Ascending aorta (tissue), 2 donors: ENCODE measurements at regions of chr15 and their contacts with region 1.

Region 1: DNA sequence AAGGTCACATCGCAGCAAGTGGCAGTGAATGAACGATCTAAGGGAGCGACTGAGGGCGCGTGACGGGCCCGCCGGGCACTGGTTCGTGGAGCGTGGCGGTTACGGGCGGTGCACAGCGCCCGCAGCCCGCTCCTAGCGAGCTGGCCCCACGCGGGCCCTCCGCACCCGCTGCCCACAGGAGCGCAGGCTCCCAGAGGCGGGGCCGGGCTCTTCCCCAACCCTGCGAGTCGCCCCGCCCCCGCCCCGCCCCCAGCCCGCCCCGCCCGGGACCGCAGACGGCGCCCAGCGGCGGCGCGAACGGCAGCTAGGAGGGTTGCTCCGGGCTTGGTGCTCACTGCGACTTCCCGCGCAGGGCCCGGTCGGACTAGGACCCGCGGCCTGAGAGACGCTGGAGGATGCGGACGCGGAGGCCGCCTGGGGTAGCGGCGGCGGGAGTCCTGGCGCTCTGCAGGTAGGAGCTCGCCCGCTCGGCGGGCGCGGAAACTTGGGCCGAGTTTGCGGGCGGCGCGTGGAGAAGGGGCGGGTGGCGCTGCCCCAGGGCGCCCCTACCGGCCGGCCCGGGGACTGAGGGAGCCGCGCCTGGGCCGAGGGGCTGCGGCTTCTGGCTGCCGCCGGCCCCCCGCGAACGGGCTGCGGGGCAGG is at the start of gene C15orf39:
- DNase-seq: peak in 1 of 2 donors; percentile 84
- H3K4me3 ChIP-seq: peak within 1 kb of the TSS; percentile 87 to 96
- H3K27ac ChIP-seq: peak within 1 kb of the TSS; percentile 96 to 98
- H3K4me1 ChIP-seq: peaks cover 17 to 33% of the 10 kb centered on the region in 2 donors
- H3K27me3 ChIP-seq: no peaks in the 10 kb centered on the region
- CTCF ChIP-seq: peak; percentile 59 to 99 (median 75)
- total RNA-seq, gene C15orf39: 30.8 TPM

Region 2: GRCh38 chr15:74978503-74978902 is 223.2 kb before region 1 on chr15:
- intact Hi-C with region 1: no loop called
- DNase-seq: no peak
- H3K4me3 ChIP-seq: no peak overlapping the region
- H3K27ac ChIP-seq: no peak overlapping the region
- H3K4me1 ChIP-seq: no peaks in the 10 kb centered on the region
- H3K27me3 ChIP-seq: no peaks in the 10 kb centered on the region
- CTCF ChIP-seq: no peak

Region 3: GRCh38 chr15:75023181-75023871 is 178.4 kb before region 1 on chr15 and contains the start of gene PPCDC:
- intact Hi-C with region 1: loop called (anchors 1 kb)
- DNase-seq: peak; percentile 85 to 98
- H3K4me3 ChIP-seq: peak within 1 kb of the TSS; percentile 81 to 97
- H3K27ac ChIP-seq: peak within 1 kb of the TSS; percentile 78 to 91
- H3K4me1 ChIP-seq: peaks cover 4 to 10% of the 10 kb centered on the region in 2 donors
- H3K27me3 ChIP-seq: no peaks in the 10 kb centered on the region
- CTCF ChIP-seq: no peak
- total RNA-seq, gene PPCDC: 8.9 TPM

Region 4: DNA sequence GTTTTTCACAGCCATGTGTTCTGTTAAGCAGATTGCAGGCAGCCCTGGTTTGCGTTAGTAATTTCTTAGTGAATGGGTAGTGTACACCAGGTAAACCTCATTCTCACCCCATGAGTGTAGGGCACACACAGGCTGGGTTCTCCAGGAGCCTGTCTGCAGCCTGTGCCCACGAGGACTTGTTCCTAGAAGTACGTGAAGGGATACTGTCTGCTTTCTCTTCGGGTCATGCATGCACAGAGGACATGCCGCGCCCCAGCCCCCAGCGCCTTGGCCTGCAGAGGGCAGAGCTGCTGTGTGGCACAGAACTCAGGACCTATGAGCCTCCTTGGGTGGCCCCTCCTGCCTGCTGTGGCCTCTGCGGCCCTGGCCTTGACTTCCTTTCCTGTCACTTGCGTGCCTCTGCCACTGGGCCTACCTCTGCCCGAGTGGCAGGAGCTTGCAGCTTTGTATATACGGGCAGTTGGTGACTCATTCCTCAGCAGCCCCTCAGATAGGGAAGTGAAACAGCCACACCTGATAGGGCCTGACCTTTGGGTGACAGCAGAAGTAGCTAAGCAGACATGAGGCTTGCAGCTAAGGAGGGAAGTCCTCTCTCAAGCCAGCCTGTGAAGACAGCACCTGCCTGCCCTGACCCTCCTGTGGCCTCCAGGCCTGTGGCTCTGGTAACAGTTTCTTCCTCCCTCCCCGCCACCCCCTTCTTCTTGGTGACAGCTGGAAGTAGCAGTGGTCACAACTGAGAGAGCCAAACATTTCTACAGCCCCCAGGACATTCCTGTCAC is 158.8 kb before region 1 on chr15:
- intact Hi-C with region 1: loop called (anchors 1 kb)
- DNase-seq: peak; percentile 81 to 89
- H3K4me3 ChIP-seq: peak overlapping the region in 1 of 2 donors; percentile 28
- H3K27ac ChIP-seq: peak overlapping the region; percentile 92 to 95
- H3K4me1 ChIP-seq: peaks cover 25 to 41% of the 10 kb centered on the region in 2 donors
- H3K27me3 ChIP-seq: no peaks in the 10 kb centered on the region
- CTCF ChIP-seq: peak; percentile 25 to 54 (median 50)

Region 5: DNA sequence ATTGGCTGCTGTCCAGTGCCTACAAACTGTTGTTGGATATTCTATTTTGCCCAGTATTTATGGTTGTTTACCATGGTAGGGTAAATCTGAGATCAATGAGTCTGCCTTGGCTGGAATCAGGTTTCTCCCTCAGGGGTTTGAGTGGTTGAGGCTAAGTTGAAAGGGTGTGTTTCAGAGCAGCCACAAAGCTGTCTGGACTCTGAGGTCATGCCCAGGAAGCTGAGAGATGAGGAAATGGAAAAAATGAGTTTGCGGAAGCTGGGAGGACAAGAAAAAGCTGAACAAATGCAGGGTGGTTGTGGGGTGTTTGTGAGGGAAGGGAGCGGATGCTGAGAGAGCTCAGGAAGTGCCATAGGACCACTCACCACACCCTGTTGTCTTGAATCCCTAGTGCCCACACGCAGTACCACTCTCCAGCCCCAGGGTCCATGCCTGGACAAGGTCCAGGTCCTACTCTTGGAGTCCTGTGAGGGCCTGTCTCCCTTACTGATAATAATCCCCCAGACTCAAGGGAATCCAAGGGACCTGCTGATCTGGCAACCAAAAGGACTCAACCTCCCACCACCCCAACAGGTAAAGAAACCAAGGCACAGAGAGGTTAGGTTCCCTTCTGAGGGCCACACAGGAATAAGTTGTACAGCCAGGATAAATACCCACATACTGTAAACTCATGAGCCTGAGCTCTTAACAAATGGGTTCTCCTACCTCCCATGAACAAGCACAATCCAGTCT is 96.8 kb before region 1 on chr15:
- intact Hi-C with region 1: no loop called
- DNase-seq: no peak
- H3K4me3 ChIP-seq: no peak overlapping the region
- H3K27ac ChIP-seq: no peak overlapping the region
- H3K4me1 ChIP-seq: peaks cover 7 to 13% of the 10 kb centered on the region in 2 donors
- H3K27me3 ChIP-seq: no peaks in the 10 kb centered on the region
- CTCF ChIP-seq: no peak

Region 6: GRCh38 chr15:75178171-75179075 is 23.3 kb before region 1 on chr15:
- intact Hi-C with region 1: loop called (anchors 2 kb)
- DNase-seq: no peak
- H3K4me3 ChIP-seq: peak overlapping the region; percentile 43 to 66
- H3K27ac ChIP-seq: peak overlapping the region; percentile 78 to 79
- H3K4me1 ChIP-seq: peaks cover 16 to 45% of the 10 kb centered on the region in 2 donors
- H3K27me3 ChIP-seq: no peaks in the 10 kb centered on the region
- CTCF ChIP-seq: no peak

Region 7: DNA sequence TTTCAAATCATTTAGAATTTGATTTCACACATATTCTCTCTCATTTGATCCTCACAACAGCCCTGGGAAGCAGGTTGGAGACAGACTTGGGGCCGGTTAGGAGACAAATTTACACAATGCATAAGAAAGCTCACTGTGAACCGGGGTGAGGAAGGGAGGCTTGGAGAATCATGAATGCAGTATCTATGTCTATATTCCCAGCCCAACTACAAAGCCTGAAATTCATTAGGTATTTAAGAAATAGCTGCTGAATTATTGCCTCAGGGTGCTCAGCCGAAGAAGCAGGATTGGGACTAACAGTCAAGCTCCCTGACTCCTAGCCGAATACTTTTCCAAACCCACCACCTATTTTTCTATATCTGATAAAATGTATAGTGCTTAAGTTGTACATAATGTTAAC is 48.0 kb after region 1 on chr15:
- intact Hi-C with region 1: no loop called
- DNase-seq: no peak
- H3K4me3 ChIP-seq: no peak overlapping the region
- H3K27ac ChIP-seq: no peak overlapping the region
- H3K4me1 ChIP-seq: no peaks in the 10 kb centered on the region
- H3K27me3 ChIP-seq: no peaks in the 10 kb centered on the region
- CTCF ChIP-seq: no peak

Region 8: GRCh38 chr15:75436861-75437260 is 235.1 kb after region 1 on chr15:
- intact Hi-C with region 1: no loop called
- DNase-seq: no peak
- H3K4me3 ChIP-seq: no peak overlapping the region
- H3K27ac ChIP-seq: no peak overlapping the region
- H3K4me1 ChIP-seq: no peaks in the 10 kb centered on the region
- H3K27me3 ChIP-seq: no peaks in the 10 kb centered on the region
- CTCF ChIP-seq: no peak